K562 (cell line): ENCODE measurements at regions of chr9 and their contacts with region 1.

Region 1: GRCh38 chr9:72013292-72013760 is 47.1 kb downstream of the C9orf57 start:
- DNase-seq: no peak
- ATAC-seq: no peak
- H3K4me3 ChIP-seq: no peak overlapping the region
- H3K27ac ChIP-seq: no peak overlapping the region
- H3K4me1 ChIP-seq: no peaks in the 10 kb centered on the region
- H3K27me3 ChIP-seq: peaks cover 0 to 14% of the 10 kb centered on the region in 2 experiments; a peak in 3 of 5 replicates
- CTCF ChIP-seq: no peak
- EP300 ChIP-seq: no peak
- POLR2A ChIP-seq: no peak
- RAD21 ChIP-seq: no peak

Region 2: GRCh38 chr9:71819115-71819739 is 194.1 kb before region 1 on chr9:
- CTCF ChIA-PET with region 1: no interaction called
- POLR2A ChIA-PET with region 1: no interaction called
- in situ Hi-C with region 1: loop called (anchors 10 kb)
- intact Hi-C with region 1: no loop called
- DNase-seq: peak; percentile 13 to 45 (median 19)
- ATAC-seq: no peak
- H3K4me3 ChIP-seq: no peak overlapping the region
- H3K27ac ChIP-seq: no peak overlapping the region
- H3K4me1 ChIP-seq: no peaks in the 10 kb centered on the region
- H3K27me3 ChIP-seq: peaks cover 0 to 6% of the 10 kb centered on the region in 2 experiments; a peak in 3 of 5 replicates
- CTCF ChIP-seq: peak; percentile 29 to 66 (median 37); a peak in 4 of 6 replicates
- EP300 ChIP-seq: no peak
- POLR2A ChIP-seq: no peak
- RAD21 ChIP-seq: peak in 1 of 2 experiments; percentile 50; a peak in 2 of 4 replicates

Region 3: DNA sequence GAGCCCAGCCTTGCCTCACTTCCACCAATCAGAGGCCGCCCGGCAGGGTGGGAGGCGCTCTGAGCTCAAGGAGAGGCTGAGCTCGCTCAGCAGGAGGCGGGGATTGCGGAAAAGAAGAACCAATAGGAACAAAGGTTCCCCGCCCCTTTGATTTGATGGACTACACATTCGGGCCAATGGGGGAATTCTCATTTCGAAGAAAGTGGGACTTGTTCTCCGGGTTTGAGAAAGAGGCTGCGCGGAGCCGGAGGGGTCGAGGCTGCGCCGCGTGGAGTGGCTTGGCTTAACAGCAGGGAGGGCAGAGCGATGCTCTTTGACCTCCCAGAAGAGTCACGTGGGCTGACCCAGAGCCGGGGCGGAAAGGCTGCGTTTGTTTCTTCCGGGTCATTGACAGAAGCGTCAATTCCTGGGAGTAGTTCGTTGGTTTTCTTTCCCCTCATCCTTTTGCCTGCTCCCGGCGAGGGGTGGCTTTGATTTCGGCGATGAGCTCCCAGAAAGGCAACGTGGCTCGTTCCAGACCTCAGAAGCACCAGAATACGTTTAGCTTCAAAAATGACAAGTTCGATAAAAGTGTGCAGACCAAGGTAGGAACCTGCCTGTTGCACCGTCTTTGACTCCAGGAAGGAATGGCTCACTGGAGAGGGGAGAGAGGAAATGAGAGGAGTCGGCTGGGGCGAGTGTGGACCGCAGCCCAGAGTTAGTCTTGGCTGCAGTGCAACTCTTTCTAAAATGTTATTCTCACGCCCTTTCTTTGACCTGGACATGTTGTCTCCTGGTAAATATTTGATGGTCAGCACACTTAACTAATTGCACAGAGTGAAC is 101.9 kb before region 1 on chr9 and contains the start of gene C9orf85:
- CTCF ChIA-PET with region 1: no interaction called
- POLR2A ChIA-PET with region 1: no interaction called
- in situ Hi-C with region 1: no loop called
- intact Hi-C with region 1: no loop called
- DNase-seq: peak; percentile 93 to 98 (median 95)
- ATAC-seq: peak; percentile 95
- H3K4me3 ChIP-seq: peak within 1 kb of the TSS; percentile 62
- H3K27ac ChIP-seq: peak within 1 kb of the TSS; percentile 90
- H3K4me1 ChIP-seq: peaks cover 5% of the 10 kb centered on the region in 2 experiments; a peak in 3 of 5 replicates
- H3K27me3 ChIP-seq: no peaks in the 10 kb centered on the region
- CTCF ChIP-seq: no peak; a peak in 1 of 6 replicates
- EP300 ChIP-seq: peak; percentile 23; the same call in 1 of the 2 replicates
- POLR2A ChIP-seq: peak; percentile 6; the same call in 1 of the 2 replicates
- RAD21 ChIP-seq: no peak
- polyA plus RNA-seq, gene C9orf85: 11.9 to 14.6 TPM

Region 4: GRCh38 chr9:72025931-72026342 is 12.6 kb after region 1 on chr9:
- CTCF ChIA-PET with region 1: no interaction called
- POLR2A ChIA-PET with region 1: no interaction called
- in situ Hi-C with region 1: no loop called
- intact Hi-C with region 1: no loop called
- DNase-seq: no peak
- ATAC-seq: no peak
- H3K4me3 ChIP-seq: no peak overlapping the region
- H3K27ac ChIP-seq: no peak overlapping the region
- H3K4me1 ChIP-seq: no peaks in the 10 kb centered on the region
- H3K27me3 ChIP-seq: no peaks in the 10 kb centered on the region; a peak in 1 of 5 replicates
- CTCF ChIP-seq: no peak
- EP300 ChIP-seq: no peak
- POLR2A ChIP-seq: no peak
- RAD21 ChIP-seq: no peak